A673 (cell line): ENCODE measurements at regions of chr5 and their contacts with region 1.

Region 1: GRCh38 chr5:150723845-150724244 is 23.0 kb upstream of the RBM22 start:
- DNase-seq: no peak
- H3K4me3 ChIP-seq: no peak overlapping the region
- H3K27ac ChIP-seq: no peak overlapping the region
- H3K4me1 ChIP-seq: no peaks in the 10 kb centered on the region
- H3K27me3 ChIP-seq: no peaks in the 10 kb centered on the region
- CTCF ChIP-seq: no peak

Region 2: GRCh38 chr5:150783422-150783928 is 59.6 kb after region 1 on chr5:
- CTCF ChIA-PET with region 1: no interaction called
- POLR2A ChIA-PET with region 1: interaction called, 11 read pairs
- intact Hi-C with region 1: no loop called
- DNase-seq: peak; percentile 93
- H3K4me3 ChIP-seq: no peak overlapping the region
- H3K27ac ChIP-seq: peak overlapping the region; percentile 69
- H3K4me1 ChIP-seq: peaks cover 62% of the 10 kb centered on the region
- H3K27me3 ChIP-seq: no peaks in the 10 kb centered on the region
- CTCF ChIP-seq: no peak